ENCODE measurements at regions of chr6 and their contacts with region 1.

Region 1: GRCh38 chr6:39166189-39166911 is 51.4 kb upstream of the SAYSD1 start:
- DNase-seq: peak; percentile 97
- ATAC-seq: peak; percentile 96
- H3K4me3 Mint-ChIP-seq: no peak overlapping the region
- H3K27ac Mint-ChIP-seq: no peak overlapping the region
- H3K4me1 Mint-ChIP-seq: peaks cover 5% of the 10 kb centered on the region
- H3K27me3 Mint-ChIP-seq: peaks cover 8% of the 10 kb centered on the region
- CTCF ChIP-seq: peak; percentile 94

Region 2: DNA sequence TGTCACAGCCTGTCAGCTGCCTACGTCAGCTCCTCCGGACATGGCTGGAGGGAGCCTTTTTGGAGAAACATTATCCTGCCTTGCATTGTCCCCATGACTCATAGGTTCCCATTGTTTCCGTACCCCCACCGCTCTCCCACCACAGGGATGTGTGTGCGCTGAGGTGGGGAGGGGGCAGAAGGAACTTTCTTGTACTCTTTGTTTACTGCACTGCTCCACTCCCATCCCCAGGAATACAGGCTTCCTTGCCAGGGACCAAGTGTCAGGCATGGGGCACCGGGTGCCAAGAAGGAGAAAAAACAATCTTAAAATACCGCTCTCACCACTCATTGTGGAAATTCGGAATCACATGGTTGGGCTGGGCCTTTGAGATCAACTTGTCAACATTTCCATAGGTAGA is 11.9 kb after region 1 on chr6:
- CTCF ChIA-PET with region 1: no interaction called
- POLR2A ChIA-PET with region 1: no interaction called
- DNase-seq: no peak
- ATAC-seq: no peak
- H3K4me3 Mint-ChIP-seq: no peak overlapping the region
- H3K27ac Mint-ChIP-seq: no peak overlapping the region
- H3K4me1 Mint-ChIP-seq: no peaks in the 10 kb centered on the region
- H3K27me3 Mint-ChIP-seq: no peaks in the 10 kb centered on the region; the same call in none of the 2 replicates
- CTCF ChIP-seq: no peak

Region 3: DNA sequence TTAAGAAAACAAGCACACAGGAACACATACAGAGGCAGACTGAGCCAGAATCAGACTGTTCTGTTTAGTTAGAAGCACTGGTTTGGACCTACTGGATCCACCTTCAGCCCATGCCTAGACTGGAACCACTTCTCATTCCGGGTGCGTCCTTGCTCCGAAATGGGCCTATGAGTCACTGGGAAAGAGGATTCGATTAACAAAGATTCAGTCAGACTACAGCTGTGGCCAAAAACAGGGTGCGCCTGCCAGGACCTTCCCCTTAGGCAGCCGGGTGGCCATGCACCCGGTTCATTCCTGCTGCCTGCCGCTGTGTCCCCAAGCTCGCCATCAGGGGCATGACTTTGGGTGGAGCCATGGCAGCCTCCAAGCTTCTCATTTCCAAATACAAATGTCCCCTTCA is 77.5 kb after region 1 on chr6:
- CTCF ChIA-PET with region 1: no interaction called
- POLR2A ChIA-PET with region 1: no interaction called
- DNase-seq: no peak
- ATAC-seq: no peak
- H3K4me3 Mint-ChIP-seq: no peak overlapping the region
- H3K27ac Mint-ChIP-seq: no peak overlapping the region
- H3K4me1 Mint-ChIP-seq: 0 out of 2 replicates have a peak, but pooled peaks cover 6% of the 10 kb centered on the region
- H3K27me3 Mint-ChIP-seq: no peaks in the 10 kb centered on the region; the same call in 1 of the 2 replicates
- CTCF ChIP-seq: no peak

Region 4: GRCh38 chr6:39309942-39310531 is 143.7 kb after region 1 on chr6:
- CTCF ChIA-PET with region 1: interaction called, 214 read pairs
- POLR2A ChIA-PET with region 1: no interaction called
- DNase-seq: peak; percentile 88
- ATAC-seq: peak; percentile 60
- H3K4me3 Mint-ChIP-seq: no peak overlapping the region
- H3K27ac Mint-ChIP-seq: no peak overlapping the region
- H3K4me1 Mint-ChIP-seq: peaks cover 2% of the 10 kb centered on the region
- H3K27me3 Mint-ChIP-seq: peaks cover 45% of the 10 kb centered on the region
- CTCF ChIP-seq: peak; percentile 86

Measured in WTC11 (cell line).